T-cell (primary cell): ENCODE measurements at regions of chr3 and their contacts with region 1.

Region 1: GRCh38 chr3:128726691-128727031 is 678 bp downstream of the RAB7A start:
- DNase-seq: peak in 17 of 35 experiments; percentile 3 to 57 (median 10)
- ATAC-seq: peak; percentile 3 to 24 (median 14)
- H3K4me3 ChIP-seq: peak overlapping the region; percentile 87 to 90
- H3K4me3 Mint-ChIP-seq: peak overlapping the region; percentile 88 to 92 (median 91)
- H3K27ac ChIP-seq: peak overlapping the region; percentile 73
- H3K27ac Mint-ChIP-seq: peak overlapping the region; percentile 76 to 84
- H3K4me1 ChIP-seq: peaks cover 27 to 52% of the 10 kb centered on the region in 2 experiments
- H3K4me1 Mint-ChIP-seq: peaks cover 58 to 63% (median 60%) of the 10 kb centered on the region in 3 donors
- H3K27me3 ChIP-seq: no peaks in the 10 kb centered on the region
- H3K27me3 Mint-ChIP-seq: no peaks in the 10 kb centered on the region

Region 2: DNA sequence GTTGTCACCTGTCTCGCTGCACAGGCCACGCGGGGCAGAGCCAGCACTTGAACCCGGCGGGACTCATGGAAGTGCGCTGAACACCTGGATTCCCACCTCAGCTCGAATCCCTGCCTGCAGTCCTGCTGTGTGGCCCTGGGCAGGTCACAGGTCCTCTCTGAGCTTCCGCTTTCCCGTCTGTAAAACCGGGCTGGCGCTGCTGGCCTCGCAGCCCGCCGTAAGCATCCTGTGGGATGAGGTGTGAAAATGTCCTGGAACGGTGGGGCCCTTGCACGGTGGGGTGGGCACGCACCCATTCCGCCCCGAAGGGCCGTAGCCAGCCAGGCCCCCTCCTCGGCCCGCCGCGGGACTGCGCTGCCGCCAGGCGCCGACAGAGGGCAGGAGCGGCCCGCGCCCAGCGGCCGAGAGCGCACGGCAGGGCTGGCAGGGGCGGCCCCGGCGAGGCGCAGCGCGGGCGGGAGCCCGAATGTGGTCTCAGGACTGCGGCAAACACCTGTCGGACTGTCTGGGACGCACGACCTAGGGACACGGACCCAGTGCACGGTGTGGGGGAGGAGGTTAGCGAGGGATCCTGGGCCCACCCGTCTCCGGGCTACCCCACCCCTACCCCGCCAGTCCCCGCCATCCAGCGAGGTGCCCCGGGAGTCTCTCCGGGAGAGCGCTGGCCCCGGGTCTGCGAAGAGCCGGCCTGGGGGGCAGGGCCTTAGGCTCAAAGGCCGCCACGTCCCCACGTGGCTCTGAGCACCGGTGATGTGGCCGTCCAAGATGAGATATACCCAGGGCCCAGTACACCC is 300.3 kb before region 1 on chr3:
- CTCF ChIA-PET with region 1: no interaction called
- POLR2A ChIA-PET with region 1: no interaction called
- DNase-seq: peak in 30 of 35 experiments; percentile 18 to 75 (median 40)
- ATAC-seq: peak; percentile 88 to 95 (median 92)
- H3K4me3 ChIP-seq: peak overlapping the region; percentile 13 to 36
- H3K4me3 Mint-ChIP-seq: no peak overlapping the region
- H3K27ac ChIP-seq: no peak overlapping the region
- H3K27ac Mint-ChIP-seq: no peak overlapping the region
- H3K4me1 ChIP-seq: peaks cover 0 to 8% of the 10 kb centered on the region in 2 experiments
- H3K4me1 Mint-ChIP-seq: no peaks in the 10 kb centered on the region
- H3K27me3 ChIP-seq: peaks cover 0 to 52% of the 10 kb centered on the region in 2 experiments
- H3K27me3 Mint-ChIP-seq: peaks cover 24 to 32% of the 10 kb centered on the region in 2 donors

Region 3: GRCh38 chr3:128665362-128666038 is 61.2 kb before region 1 on chr3:
- CTCF ChIA-PET with region 1: no interaction called
- POLR2A ChIA-PET with region 1: no interaction called
- DNase-seq: no peak
- ATAC-seq: no peak
- H3K4me3 ChIP-seq: no peak overlapping the region
- H3K4me3 Mint-ChIP-seq: no peak overlapping the region
- H3K27ac ChIP-seq: no peak overlapping the region
- H3K27ac Mint-ChIP-seq: no peak overlapping the region
- H3K4me1 ChIP-seq: no peaks in the 10 kb centered on the region
- H3K4me1 Mint-ChIP-seq: peaks cover 0 to 2% (median 0%) of the 10 kb centered on the region in 3 donors
- H3K27me3 ChIP-seq: peaks cover 0 to 6% of the 10 kb centered on the region in 2 experiments
- H3K27me3 Mint-ChIP-seq: no peaks in the 10 kb centered on the region

Region 4: DNA sequence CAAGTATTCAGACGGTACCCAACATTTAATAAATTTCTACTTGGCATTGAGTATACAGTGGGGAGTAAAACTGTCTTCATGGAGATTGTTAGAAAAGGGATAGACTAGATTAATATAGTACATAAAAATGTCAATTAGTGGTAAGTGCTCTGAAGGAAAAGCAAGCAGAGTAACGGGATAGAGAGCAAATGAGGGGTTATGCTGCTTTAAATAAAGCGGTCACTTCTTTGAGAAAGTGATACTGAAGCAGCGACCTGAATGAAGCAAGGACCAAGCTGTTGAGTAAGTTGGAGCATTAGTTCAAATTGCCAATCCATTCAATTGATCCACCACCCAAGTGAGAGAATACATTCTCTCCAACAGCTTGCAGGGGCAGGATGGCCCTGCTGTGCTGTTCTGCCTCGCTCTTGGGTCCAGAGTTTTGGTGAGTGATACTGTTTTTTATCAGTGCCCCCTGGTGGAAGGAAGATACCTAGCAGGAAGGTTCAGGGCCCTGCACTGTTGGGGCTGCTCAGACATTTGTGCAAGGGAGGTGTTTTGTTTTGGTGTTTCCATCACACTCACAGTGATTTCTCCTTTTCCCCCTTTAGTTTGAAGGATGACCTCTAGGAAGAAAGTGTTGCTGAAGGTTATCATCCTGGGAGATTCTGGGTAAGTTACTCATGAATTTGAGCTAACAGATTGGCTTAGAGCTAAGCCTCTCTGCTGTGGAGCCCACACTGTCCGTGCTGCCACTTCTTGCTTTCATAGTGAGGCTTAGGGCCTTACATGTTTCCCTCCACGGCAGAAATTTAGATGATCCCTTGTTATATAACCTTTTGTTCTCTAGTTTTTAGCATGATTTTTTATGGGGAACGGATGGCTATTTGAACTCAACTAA is 68.3 kb after region 1 on chr3:
- CTCF ChIA-PET with region 1: interaction called, 3 to 11 read pairs
- POLR2A ChIA-PET with region 1: no interaction called
- DNase-seq: peak; percentile 33 to 85 (median 56)
- ATAC-seq: peak; percentile 94 to 95 (median 94)
- H3K4me3 ChIP-seq: no peak overlapping the region
- H3K4me3 Mint-ChIP-seq: peak overlapping the region in 2 of 3 donors; percentile 23 to 25
- H3K27ac ChIP-seq: peak overlapping the region; percentile 32
- H3K27ac Mint-ChIP-seq: peak overlapping the region; percentile 78 to 86
- H3K4me1 ChIP-seq: peaks cover 34 to 38% of the 10 kb centered on the region in 2 experiments
- H3K4me1 Mint-ChIP-seq: peaks cover 57 to 69% (median 64%) of the 10 kb centered on the region in 3 donors
- H3K27me3 ChIP-seq: no peaks in the 10 kb centered on the region
- H3K27me3 Mint-ChIP-seq: no peaks in the 10 kb centered on the region